Breast epithelium (tissue), 4 donors: ENCODE measurements at regions of chr2 and their contacts with region 1.

Region 1: DNA sequence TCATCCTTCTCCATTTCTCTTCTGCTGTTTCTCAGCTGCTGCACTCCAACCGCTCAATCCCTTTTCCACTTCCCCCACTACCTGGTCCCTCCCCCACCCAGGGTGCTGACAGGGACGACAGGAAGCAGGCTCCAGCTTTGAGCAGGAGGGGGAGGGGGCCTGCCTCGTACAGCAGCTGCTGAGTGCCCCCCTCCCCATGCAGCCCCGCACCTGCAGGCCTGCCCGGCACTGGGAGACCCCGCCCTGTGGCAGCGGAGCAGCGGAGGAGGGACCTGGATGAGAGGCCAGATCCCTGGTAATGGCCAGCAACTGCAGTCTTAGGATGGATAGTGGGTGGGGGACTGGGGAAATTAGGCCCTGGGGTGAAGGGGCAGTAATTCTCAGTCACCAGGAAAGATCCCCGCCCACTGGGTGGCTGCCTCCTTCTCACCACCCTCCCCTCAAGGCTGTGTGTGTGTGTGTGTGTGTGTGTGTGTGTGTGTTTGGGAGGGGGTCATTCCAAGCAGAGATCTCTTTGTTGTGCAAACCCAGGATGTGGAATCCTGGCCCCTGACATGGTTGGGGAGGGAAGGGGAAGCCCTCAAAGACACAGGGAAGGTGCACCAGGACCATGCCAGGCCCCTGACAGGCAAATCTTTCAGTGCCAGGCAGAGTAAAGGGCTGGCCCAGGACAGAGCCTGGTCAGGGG is 6.8 kb upstream of the CRYBA2 start:
- DNase-seq: no peak
- H3K4me3 ChIP-seq: no peak overlapping the region
- H3K27ac ChIP-seq: no peak overlapping the region
- H3K4me1 ChIP-seq: peaks cover 10 to 12% of the 10 kb centered on the region in 2 donors
- H3K27me3 ChIP-seq: peaks cover 0 to 35% of the 10 kb centered on the region in 2 donors
- CTCF ChIP-seq: no peak
- POLR2A ChIP-seq: no peak

Region 2: DNA sequence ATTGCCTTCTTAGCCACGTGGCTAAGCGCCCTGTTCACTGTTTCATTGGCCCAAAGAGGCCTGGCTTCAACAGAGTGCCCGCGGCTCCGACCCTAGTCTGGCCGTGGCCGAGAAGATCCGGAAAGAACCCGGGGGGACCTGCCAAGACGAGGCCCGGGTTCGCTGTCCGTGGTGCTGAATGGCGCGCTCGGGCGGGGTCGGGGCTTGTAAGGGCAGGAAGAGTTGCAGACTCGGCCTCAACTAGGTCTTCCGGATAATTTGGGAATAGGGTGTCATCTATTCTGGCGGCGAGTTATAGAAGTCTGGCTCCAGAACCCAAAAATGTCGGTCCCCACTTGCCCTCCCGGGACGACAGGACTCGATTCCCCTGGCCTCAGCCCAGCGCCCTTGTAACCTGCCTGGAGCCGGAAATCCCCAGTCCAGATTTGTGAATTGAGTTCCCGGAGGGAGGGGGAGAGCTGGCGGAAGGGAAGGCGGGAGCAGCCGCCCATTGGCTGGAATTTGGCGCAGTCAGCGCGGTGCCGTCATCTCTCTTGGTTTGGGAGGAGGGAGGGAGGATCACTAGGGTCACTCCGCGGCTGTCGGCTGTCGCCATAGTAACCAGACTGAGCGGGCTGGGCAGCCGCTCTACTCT is 37.0 kb before region 1 on chr2:
- intact Hi-C with region 1: no loop called
- DNase-seq: no peak
- H3K4me3 ChIP-seq: no peak overlapping the region
- H3K27ac ChIP-seq: no peak overlapping the region
- H3K4me1 ChIP-seq: peaks cover 3 to 12% of the 10 kb centered on the region in 2 donors
- H3K27me3 ChIP-seq: peaks cover 29 to 79% of the 10 kb centered on the region in 2 donors
- CTCF ChIP-seq: no peak
- POLR2A ChIP-seq: no peak

Region 3: GRCh38 chr2:219073413-219074129 is 73.5 kb after region 1 on chr2:
- intact Hi-C with region 1: loop called (anchors 2 kb)
- DNase-seq: no peak
- H3K4me3 ChIP-seq: no peak overlapping the region
- H3K27ac ChIP-seq: no peak overlapping the region
- H3K4me1 ChIP-seq: no peaks in the 10 kb centered on the region
- H3K27me3 ChIP-seq: no peaks in the 10 kb centered on the region
- CTCF ChIP-seq: peak in 2 of 3 donors; percentile 18 to 20
- POLR2A ChIP-seq: no peak